Astrocyte of the cerebellum (primary cell): ENCODE measurements at regions of chr12 and their contacts with region 1.

Region 1: GRCh38 chr12:109982210-109982609 is 14.0 kb downstream of the GIT2 start:
- DNase-seq: no peak
- H3K4me3 ChIP-seq: no peak overlapping the region
- CTCF ChIP-seq: no peak

Region 2: DNA sequence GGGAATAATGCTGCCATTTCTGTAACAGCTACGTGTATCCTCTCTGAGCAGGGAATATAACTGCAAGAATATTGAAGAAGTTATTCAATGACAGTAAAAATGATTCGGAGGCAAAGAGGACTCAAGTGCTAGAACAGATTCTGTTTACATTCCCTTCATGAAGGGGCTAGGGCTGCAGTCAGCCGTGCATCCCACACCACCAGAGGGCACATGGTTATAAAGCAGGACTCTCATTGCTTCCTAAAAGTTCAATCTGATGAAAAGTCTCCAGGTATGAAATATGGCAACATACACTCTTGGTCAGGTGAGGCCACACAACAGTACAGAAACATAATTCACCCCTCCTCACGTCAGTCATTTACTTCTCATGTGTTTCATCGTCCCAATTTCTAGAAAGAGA is 48.2 kb before region 1 on chr12:
- in situ Hi-C with region 1: loop called (anchors 5 kb)
- DNase-seq: no peak
- H3K4me3 ChIP-seq: no peak overlapping the region
- CTCF ChIP-seq: peak; percentile 78

Region 3: GRCh38 chr12:110048242-110049027 is 66.2 kb after region 1 on chr12 and contains the start of gene C12orf76:
- in situ Hi-C with region 1: no loop called
- DNase-seq: peak; percentile 87
- H3K4me3 ChIP-seq: peak within 1 kb of the TSS; percentile 63
- CTCF ChIP-seq: no peak